Activated naive CD4-positive, alpha-beta T cell treated with anti-CD3 and anti-CD28 coated beads for 36 hours (primary cell): ENCODE measurements at regions of chr6 and their contacts with region 1.

Region 1: DNA sequence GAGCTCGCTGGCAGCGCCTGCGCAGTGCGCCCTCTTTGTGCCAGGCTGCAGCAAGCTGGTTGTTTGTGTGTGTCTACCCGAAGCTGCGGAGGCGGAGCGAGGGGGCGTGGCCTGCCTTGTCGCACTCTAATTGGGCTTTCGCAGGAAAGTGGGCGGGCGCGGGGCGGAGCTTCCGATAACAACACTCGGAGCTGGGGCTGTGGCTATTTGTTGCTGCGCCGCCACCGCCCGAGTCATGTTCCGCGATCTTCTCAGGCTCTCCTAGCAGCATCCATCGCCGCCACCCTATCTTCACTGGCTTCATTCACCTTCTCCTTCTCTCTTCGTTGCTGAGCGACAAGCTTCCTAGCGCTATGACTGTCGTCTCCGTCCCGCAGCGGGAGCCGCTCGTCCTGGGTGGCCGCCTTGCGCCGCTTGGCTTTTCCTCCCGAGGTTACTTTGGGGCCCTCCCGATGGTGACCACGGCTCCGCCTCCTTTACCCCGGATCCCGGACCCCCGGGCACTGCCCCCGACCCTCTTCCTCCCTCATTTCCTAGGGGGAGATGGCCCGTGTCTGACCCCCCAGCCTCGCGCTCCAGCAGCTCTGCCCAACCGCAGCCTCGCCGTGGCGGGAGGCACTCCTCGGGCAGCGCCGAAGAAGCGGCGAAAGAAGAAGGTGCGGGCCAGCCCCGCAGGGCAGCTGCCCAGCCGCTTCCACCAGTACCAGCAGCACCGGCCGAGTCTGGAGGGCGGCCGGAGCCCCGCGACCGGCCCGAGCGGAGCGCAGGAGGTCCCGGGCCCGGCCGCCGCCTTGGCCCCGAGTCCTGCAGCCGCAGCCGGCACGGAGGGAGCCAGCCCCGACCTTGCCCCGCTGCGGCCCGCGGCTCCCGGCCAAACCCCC is at the start of gene PNRC1:
- DNase-seq: peak; percentile 100
- H3K4me3 Mint-ChIP-seq: peak within 1 kb of the TSS; percentile 93
- H3K27ac Mint-ChIP-seq: peak within 1 kb of the TSS; percentile 99
- H3K4me1 Mint-ChIP-seq: peaks cover 30% of the 10 kb centered on the region
- H3K27me3 Mint-ChIP-seq: no peaks in the 10 kb centered on the region
- total RNA-seq, gene PNRC1: 110 to 111 TPM

Region 2: GRCh38 chr6:87589693-87590549 is 1490.9 kb before region 1 on chr6 and contains the starts of genes ORC3 and RARS2:
- CTCF ChIA-PET with region 1: no interaction called
- intact Hi-C with region 1: loop called (anchors 1 kb)
- DNase-seq: peak; percentile 97
- H3K4me3 Mint-ChIP-seq: peak within 1 kb of the TSS; percentile 90
- H3K27ac Mint-ChIP-seq: peak within 1 kb of the TSS; percentile 83
- H3K4me1 Mint-ChIP-seq: peaks cover 60% of the 10 kb centered on the region
- H3K27me3 Mint-ChIP-seq: no peaks in the 10 kb centered on the region
- total RNA-seq, gene ORC3: 33.8 to 36.1 TPM
- total RNA-seq, gene RARS2: 15.9 to 17.4 TPM

Region 3: DNA sequence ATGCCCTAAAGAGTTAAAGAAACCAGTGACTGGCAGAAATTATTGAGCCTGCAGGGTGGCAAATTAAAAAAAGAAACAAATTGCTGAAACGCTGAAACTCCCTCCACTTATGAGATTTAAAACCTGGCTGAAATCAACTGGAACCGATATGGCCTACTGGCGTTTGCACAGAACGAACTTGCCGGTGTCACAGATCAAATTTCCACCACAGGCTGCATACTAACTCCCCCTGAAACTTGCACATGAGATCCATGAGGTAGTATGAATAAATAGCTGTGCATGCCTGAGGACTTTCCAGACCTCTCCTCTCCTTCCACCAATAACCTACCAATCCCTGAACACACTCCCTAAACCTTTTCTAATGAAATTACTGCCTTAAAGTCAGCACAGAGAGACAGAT is 267.7 kb before region 1 on chr6:
- CTCF ChIA-PET with region 1: no interaction called
- intact Hi-C with region 1: no loop called
- DNase-seq: no peak
- H3K4me3 Mint-ChIP-seq: no peak overlapping the region
- H3K27ac Mint-ChIP-seq: no peak overlapping the region
- H3K4me1 Mint-ChIP-seq: peaks cover 5% of the 10 kb centered on the region
- H3K27me3 Mint-ChIP-seq: no peaks in the 10 kb centered on the region

Region 4: DNA sequence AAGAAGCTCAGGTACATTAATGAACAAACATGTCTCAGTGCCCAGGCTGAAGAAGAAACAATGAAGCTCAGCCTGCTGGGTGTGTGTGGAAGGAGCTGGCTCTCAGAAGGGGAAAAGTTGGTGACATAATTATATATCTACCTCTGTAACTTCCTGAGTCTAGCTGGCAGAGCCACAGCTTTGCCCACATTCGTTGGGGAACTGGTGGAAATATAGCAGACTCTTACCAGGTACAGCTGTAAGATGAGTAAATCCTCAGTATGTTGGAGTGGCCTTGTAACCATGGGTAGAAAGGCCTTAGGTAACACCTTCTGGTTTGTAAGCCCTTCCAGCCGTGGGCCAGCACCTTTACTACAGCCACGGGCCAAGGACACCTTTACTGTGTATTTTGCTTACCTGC is 30.1 kb before region 1 on chr6:
- CTCF ChIA-PET with region 1: no interaction called
- intact Hi-C with region 1: loop called (anchors 1 kb)
- DNase-seq: no peak
- H3K4me3 Mint-ChIP-seq: no peak overlapping the region
- H3K27ac Mint-ChIP-seq: no peak overlapping the region
- H3K4me1 Mint-ChIP-seq: peaks cover 10% of the 10 kb centered on the region
- H3K27me3 Mint-ChIP-seq: no peaks in the 10 kb centered on the region

Region 5: DNA sequence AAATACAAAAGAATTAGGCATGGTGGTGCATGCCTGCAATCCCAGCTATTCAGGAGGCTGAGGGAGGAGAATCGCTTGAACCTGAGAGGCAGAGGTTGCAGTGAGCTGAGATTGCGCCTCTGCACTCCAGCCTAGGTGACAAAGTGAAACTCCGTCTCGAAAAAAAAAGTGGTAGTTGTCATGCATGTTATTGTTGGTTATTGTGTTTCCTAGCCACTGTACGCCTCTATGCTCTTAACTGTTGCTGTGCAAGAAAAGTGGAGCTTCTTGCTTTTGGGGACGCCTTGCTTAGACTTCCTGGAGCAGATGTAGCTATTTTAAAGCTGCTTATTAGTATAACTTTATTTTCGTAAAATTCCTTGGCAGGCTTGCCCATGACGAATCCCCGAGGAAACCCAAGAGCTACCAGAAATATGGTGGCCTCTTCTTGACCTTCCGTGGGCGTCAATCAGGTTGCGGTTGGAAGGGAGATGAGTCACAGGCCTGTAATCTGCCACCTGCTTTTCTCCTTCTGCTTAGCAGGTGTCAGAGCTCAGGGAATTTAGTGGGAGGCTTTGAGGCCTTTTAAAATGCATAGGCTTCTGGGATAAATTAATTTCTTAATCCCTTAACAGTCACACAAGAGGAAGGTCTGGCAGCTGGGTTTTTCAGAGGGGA is 217.0 kb after region 1 on chr6:
- CTCF ChIA-PET with region 1: no interaction called
- intact Hi-C with region 1: loop called (anchors 2 kb)
- DNase-seq: peak; percentile 83
- H3K4me3 Mint-ChIP-seq: peak overlapping the region; percentile 7
- H3K27ac Mint-ChIP-seq: peak overlapping the region; percentile 46
- H3K4me1 Mint-ChIP-seq: peaks cover 18% of the 10 kb centered on the region
- H3K27me3 Mint-ChIP-seq: no peaks in the 10 kb centered on the region

Region 6: DNA sequence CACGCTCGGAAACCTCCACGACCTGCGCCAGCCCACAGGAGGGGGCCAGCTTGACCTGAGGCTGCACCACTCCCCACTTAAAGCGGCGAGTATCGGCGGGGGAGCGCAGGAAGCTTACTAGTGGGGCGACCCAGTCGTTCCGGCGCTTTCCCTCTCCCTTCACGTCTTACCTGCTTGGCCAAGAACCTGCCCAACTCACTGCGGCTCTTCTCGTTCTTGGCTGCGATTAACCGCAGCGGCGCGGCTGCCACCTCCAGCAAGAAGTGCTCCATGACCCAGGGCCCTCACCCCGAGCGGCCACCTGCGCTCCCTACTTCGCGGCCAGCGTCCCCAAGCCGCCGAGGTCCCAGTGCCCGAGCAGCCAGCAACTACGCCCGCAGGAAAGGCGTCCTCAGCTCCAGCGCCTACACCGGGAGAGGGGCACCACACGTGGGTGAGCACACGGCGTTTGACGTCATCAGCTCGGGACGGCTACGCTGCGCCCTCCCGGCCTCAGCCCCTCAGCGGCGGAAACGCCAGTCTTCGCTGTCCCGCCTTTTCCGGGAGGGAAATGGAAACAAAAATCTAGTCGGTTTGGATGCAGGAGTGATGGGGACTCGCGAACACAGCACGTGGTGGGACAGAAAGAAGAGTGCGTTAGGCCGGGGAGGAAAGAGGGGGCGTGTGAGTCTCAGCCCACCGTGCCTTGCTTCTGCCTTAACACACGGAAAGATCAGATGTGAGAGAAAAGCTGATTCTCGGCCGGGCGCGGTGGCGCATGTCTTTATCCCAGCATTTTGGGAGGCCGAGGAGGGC is 738.8 kb after region 1 on chr6 and contains the start of gene MDN1:
- CTCF ChIA-PET with region 1: no interaction called
- intact Hi-C with region 1: loop called (anchors 2 kb)
- DNase-seq: peak; percentile 94
- H3K4me3 Mint-ChIP-seq: peak within 1 kb of the TSS; percentile 82
- H3K27ac Mint-ChIP-seq: peak within 1 kb of the TSS; percentile 88
- H3K4me1 Mint-ChIP-seq: peaks cover 36% of the 10 kb centered on the region
- H3K27me3 Mint-ChIP-seq: no peaks in the 10 kb centered on the region
- total RNA-seq, gene MDN1: 42.1 to 52.1 TPM

Region 7: GRCh38 chr6:90586836-90587638 is 1506.3 kb after region 1 on chr6 and contains the start of gene MAP3K7:
- CTCF ChIA-PET with region 1: no interaction called
- intact Hi-C with region 1: loop called (anchors 2 kb)
- DNase-seq: peak; percentile 98
- H3K4me3 Mint-ChIP-seq: peak within 1 kb of the TSS; percentile 99
- H3K27ac Mint-ChIP-seq: peak within 1 kb of the TSS; percentile 99
- H3K4me1 Mint-ChIP-seq: peaks cover 40% of the 10 kb centered on the region
- H3K27me3 Mint-ChIP-seq: no peaks in the 10 kb centered on the region
- total RNA-seq, gene MAP3K7: 23.2 to 23.6 TPM